ENCODE measurements at regions of chr2 and their contacts with region 1.

Region 1: DNA sequence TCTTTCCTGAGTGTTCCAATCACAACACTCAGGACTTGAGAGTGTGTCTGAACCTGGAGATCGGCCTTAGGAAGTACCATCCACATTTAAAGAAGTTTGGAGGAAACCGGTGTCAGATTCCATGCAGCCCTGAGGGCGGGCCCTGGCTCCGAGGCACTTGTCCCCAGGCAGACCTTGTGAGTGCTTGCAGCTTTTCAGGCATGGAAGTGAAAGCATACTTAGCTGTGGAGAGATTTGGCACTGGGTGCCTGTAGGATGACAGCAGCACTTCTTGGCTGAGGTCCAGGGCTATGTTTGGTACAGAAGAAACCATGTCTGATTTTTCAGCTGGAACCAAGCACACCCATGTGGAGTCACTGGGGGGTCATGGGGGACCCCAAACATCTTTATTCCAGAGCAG is 230.8 kb downstream of the SEPTIN10 start:
- DNase-seq: peak; percentile 80

Region 2: GRCh38 chr2:109284826-109285225 is 98.1 kb before region 1 on chr2:
- intact Hi-C with region 1: loop called (anchors 10 kb)
- DNase-seq: no peak